Psoas muscle (tissue), 8 donors: ENCODE measurements at regions of chr22 and their contacts with region 1.

Region 1: GRCh38 chr22:41816181-41816621 is 15.7 kb downstream of the CCDC134 start:
- DNase-seq: no peak
- ATAC-seq: peak; percentile 91 to 96 (median 94)
- H3K4me3 ChIP-seq: no peak overlapping the region
- H3K27ac ChIP-seq: peak overlapping the region; percentile 76
- H3K4me1 ChIP-seq: peaks cover 19% of the 10 kb centered on the region
- H3K27me3 ChIP-seq: no peaks in the 10 kb centered on the region
- CTCF ChIP-seq: no peak

Region 2: DNA sequence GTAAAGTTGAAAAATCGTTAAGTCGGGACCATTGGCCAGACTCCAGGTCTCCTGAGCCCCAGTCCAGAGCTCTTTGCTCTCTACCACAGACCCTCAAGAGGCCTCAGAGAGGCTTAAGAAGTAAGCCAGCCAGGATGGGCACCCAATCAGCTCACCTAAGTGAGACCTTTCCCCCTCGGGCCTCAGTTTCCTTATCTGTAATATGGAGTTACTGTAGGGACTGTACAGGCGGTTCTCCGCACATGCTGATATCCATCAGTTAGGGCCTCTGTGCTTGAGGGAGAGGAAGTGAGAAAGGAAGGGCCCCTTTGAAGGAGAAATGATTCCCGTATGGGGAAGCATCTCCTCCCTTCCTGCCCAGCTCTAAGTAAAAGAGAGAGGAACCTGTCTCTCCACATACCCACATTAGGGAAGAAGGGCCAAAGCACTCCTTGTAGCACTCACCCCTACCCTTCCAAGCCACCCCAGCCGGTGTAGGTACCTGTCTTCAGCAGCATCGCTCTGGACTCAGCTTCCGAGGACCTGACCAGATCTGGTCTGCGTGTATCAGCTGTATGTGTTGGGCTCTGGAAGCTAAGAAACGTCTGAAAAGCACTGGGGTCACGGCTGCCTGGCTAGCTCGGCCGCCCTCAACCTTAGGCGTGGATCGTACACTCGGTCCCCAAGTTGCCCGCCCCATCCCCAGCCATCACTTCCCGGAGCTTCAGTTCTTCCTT is 253.8 kb after region 1 on chr22:
- intact Hi-C with region 1: loop called (anchors 10 kb)
- DNase-seq: no peak
- ATAC-seq: peak in 3 of 4 donors; percentile 1 to 11 (median 5)
- H3K4me3 ChIP-seq: peak overlapping the region; percentile 74
- H3K27ac ChIP-seq: peak overlapping the region; percentile 83
- H3K4me1 ChIP-seq: peaks cover 22% of the 10 kb centered on the region
- H3K27me3 ChIP-seq: no peaks in the 10 kb centered on the region
- CTCF ChIP-seq: no peak

Region 3: GRCh38 chr22:42079319-42080251 is 263.4 kb after region 1 on chr22 and contains the start of gene SMDT1:
- intact Hi-C with region 1: loop called in 1 of 2 experiments (anchors 10 kb)
- DNase-seq: peak; percentile 100
- ATAC-seq: peak; percentile 92 to 94 (median 93)
- H3K4me3 ChIP-seq: peak within 1 kb of the TSS; percentile 71
- H3K27ac ChIP-seq: peak within 1 kb of the TSS; percentile 95
- H3K4me1 ChIP-seq: peaks cover 40% of the 10 kb centered on the region
- H3K27me3 ChIP-seq: no peaks in the 10 kb centered on the region
- CTCF ChIP-seq: no peak
- total RNA-seq, gene SMDT1: 117 to 164 (median 129) TPM